Activated CD4-positive, alpha-beta T cell treated with anti-CD3 and anti-CD28 coated beads, Interleukin-2, amount 10 ng/mL, durations not matched to agents 24 days and 14 days (primary cell): ENCODE measurements at regions of chr11 and their contacts with region 1.

Region 1: GRCh38 chr11:95067039-95067840 is 521 bp downstream of the SRSF8 start:
- DNase-seq: peak; percentile 93
- H3K4me3 Mint-ChIP-seq: peak overlapping the region; percentile 98
- H3K27ac Mint-ChIP-seq: peak overlapping the region; percentile 98
- H3K4me1 Mint-ChIP-seq: peaks cover 18% of the 10 kb centered on the region
- H3K27me3 Mint-ChIP-seq: peaks cover 18% of the 10 kb centered on the region

Region 2: DNA sequence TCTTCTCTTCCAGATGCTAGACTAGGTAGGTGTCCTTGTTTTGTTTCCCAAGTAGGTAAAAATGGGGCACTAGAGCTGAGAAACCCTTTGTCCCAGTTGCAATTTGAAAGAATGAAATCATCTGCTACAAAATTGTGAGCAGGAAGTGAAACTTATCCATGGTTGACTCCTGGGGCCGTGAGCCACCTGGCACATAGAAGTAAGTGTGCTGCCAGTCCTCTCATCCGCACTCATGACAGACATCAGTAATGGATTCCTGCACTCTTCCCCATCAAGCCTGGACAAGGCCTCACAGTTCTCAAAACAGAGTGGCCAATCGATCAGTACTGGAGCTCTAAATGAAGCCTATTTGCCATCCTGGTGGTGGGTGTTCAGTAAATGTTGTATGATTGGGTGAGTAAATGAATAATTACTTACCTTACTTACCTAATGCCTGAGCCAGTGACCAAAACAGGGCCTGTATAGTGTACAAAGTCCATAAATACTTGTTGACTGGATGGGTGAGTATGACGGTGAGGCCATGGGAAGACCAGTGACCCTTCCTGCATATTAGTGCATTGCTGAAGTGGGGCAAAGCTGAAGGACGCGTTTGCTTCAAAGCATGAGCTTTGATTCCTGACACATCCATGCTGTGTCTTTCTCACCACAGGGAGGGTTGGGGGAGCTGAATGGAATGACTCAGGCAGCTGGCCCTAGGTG is 1115.0 kb before region 1 on chr11:
- intact Hi-C with region 1: no loop called
- DNase-seq: no peak
- H3K4me3 Mint-ChIP-seq: no peak overlapping the region
- H3K27ac Mint-ChIP-seq: no peak overlapping the region
- H3K4me1 Mint-ChIP-seq: no peaks in the 10 kb centered on the region
- H3K27me3 Mint-ChIP-seq: no peaks in the 10 kb centered on the region

Region 3: DNA sequence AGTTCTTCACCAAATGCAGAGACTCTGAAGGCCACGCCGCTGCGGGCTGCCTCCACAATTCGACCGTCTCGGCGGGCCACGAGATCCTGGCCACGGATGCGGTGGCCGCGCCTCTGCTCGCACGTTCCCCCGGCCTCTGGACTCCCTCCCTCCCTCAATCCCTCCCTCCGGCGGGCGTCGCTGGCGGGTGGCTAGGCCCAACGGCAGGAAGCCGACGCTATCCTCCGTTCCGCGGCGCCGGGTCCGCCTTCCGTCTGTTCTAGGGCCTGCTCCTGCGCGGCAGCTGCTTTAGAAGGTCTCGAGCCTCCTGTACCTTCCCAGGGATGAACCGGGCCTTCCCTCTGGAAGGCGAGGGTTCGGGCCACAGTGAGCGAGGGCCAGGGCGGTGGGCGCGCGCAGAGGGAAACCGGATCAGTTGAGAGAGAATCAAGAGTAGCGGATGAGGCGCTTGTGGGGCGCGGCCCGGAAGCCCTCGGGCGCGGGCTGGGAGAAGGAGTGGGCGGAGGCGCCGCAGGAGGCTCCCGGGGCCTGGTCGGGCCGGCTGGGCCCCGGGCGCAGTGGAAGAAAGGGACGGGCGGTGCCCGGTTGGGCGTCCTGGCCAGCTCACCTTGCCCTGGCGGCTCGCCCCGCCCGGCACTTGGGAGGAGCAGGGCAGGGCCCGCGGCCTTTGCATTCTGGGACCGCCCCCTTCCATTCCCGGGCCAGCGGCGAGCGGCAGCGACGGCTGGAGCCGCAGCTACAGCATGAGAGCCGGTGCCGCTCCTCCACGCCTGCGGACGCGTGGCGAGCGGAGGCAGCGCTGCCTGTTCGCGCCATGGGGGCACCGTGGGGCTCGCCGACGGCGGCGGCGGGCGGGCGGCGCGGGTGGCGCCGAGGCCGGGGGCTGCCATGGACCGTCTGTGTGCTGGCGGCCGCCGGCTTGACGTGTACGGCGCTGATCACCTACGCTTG is 523.3 kb before region 1 on chr11 and contains the start of gene FUT4:
- intact Hi-C with region 1: loop called (anchors 5 kb)
- DNase-seq: peak; percentile 93
- H3K4me3 Mint-ChIP-seq: peak within 1 kb of the TSS; percentile 99
- H3K27ac Mint-ChIP-seq: peak within 1 kb of the TSS; percentile 100
- H3K4me1 Mint-ChIP-seq: peaks cover 33% of the 10 kb centered on the region
- H3K27me3 Mint-ChIP-seq: peaks cover 6% of the 10 kb centered on the region
- total RNA-seq, gene FUT4: 8.3 and 8.8 TPM in 2 replicates

Region 4: GRCh38 chr11:94973099-94973968 is 93.9 kb before region 1 on chr11 and contains the starts of genes CWC15 and KDM4D:
- intact Hi-C with region 1: loop called (anchors 1 kb)
- DNase-seq: peak; percentile 98
- H3K4me3 Mint-ChIP-seq: peak within 1 kb of the TSS; percentile 94
- H3K27ac Mint-ChIP-seq: peak within 1 kb of the TSS; percentile 93
- H3K4me1 Mint-ChIP-seq: peaks cover 33% of the 10 kb centered on the region
- H3K27me3 Mint-ChIP-seq: no peaks in the 10 kb centered on the region
- total RNA-seq, gene CWC15: 87.6 and 96.2 TPM in 2 replicates
- total RNA-seq, gene KDM4D: 1.2 TPM in 2 replicates

Region 5: GRCh38 chr11:95089620-95090542 is 22.6 kb after region 1 on chr11 and contains the start of gene ENDOD1:
- intact Hi-C with region 1: loop called (anchors 1 kb)
- DNase-seq: peak; percentile 96
- H3K4me3 Mint-ChIP-seq: peak within 1 kb of the TSS; percentile 91
- H3K27ac Mint-ChIP-seq: peak within 1 kb of the TSS; percentile 98
- H3K4me1 Mint-ChIP-seq: peaks cover 67% of the 10 kb centered on the region
- H3K27me3 Mint-ChIP-seq: no peaks in the 10 kb centered on the region
- total RNA-seq, gene ENDOD1: 34.1 and 34.3 TPM in 2 replicates

Region 6: DNA sequence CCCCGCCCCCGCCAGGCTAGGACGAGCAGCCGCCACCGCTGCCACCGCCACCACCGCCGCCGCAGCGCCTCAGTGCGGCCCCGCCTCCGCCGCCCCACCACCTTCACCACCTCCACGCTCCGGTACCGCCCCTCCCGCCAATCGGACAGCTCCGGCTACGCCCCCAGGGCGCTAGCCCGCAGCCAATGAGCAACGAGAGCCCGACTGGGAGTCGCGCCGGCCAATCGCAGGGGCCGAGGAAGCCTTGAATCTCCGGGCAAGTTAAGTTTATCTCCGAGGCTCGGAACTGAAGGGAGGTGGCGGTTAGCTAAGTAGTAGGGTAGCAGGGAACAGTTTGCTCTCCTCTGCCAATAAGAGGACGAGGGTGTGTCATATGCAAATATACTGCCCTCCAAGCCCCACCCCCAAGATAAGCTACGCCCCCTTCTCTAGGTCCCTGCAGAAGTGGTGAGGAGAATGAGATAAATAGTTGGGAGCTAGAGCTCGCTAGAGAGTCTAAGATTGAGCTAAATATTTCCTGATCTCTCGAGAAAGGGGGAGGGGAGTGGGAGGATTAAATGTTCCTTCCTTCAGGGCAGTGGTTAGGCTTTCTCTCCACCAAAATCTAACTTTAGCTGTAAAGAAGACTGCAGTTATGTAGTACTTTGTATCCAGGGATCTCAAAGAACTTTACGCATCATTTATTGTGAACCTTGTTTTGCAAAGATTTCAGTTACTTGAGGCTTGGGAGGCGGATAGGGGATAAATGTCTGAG is 164.1 kb after region 1 on chr11 and contains the start of gene SESN3:
- intact Hi-C with region 1: loop called (anchors 1 kb)
- DNase-seq: peak; percentile 100
- H3K4me3 Mint-ChIP-seq: no peak within 1 kb of the TSS
- H3K27ac Mint-ChIP-seq: peak within 1 kb of the TSS; percentile 92
- H3K4me1 Mint-ChIP-seq: peaks cover 28% of the 10 kb centered on the region
- H3K27me3 Mint-ChIP-seq: no peaks in the 10 kb centered on the region
- total RNA-seq, gene SESN3: 63.4 and 64.2 TPM in 2 replicates

Region 7: GRCh38 chr11:95715777-95716241 is 648.6 kb after region 1 on chr11:
- intact Hi-C with region 1: loop called (anchors 5 kb)
- DNase-seq: peak; percentile 73
- H3K4me3 Mint-ChIP-seq: peak overlapping the region; percentile 57
- H3K27ac Mint-ChIP-seq: peak overlapping the region; percentile 84
- H3K4me1 Mint-ChIP-seq: peaks cover 45% of the 10 kb centered on the region
- H3K27me3 Mint-ChIP-seq: no peaks in the 10 kb centered on the region